ENCODE measurements at regions of chr2 and their contacts with region 1.

Region 1: GRCh38 chr2:37555457-37555856 is 116.0 kb downstream of the CDC42EP3 start:
- DNase-seq: peak; percentile 50
- ATAC-seq: peak; percentile 95
- H3K4me3 Mint-ChIP-seq: no peak overlapping the region
- H3K27ac Mint-ChIP-seq: no peak overlapping the region
- H3K4me1 Mint-ChIP-seq: peaks cover 40% of the 10 kb centered on the region
- H3K27me3 Mint-ChIP-seq: no peaks in the 10 kb centered on the region
- CTCF ChIP-seq: no peak

Region 2: DNA sequence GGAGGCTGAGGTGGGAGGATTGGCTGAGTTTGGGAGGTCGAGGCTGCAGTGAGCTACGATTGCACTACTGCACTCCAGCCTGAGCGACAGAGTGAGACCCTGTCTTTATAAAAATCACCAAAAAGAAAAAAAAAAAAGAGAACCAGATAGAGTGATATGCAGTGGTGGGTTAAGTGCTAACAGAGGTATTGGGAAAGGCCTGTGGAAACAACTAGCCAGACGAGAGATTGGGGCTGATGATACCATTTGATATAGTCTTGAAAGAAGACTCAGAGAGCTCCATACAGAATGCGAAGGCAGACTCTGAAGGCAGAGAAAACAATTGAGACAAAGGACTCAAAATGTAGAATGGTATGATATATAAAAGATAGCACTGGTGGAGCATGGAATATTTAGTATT is 18.1 kb before region 1 on chr2:
- CTCF ChIA-PET with region 1: interaction called, 5 read pairs
- POLR2A ChIA-PET with region 1: no interaction called
- intact Hi-C with region 1: loop called (anchors 2 kb)
- DNase-seq: no peak
- ATAC-seq: no peak
- H3K4me3 Mint-ChIP-seq: no peak overlapping the region
- H3K27ac Mint-ChIP-seq: no peak overlapping the region
- H3K4me1 Mint-ChIP-seq: no peaks in the 10 kb centered on the region
- H3K27me3 Mint-ChIP-seq: no peaks in the 10 kb centered on the region
- CTCF ChIP-seq: no peak

Region 3: GRCh38 chr2:37600735-37601134 is 45.3 kb after region 1 on chr2:
- CTCF ChIA-PET with region 1: no interaction called
- POLR2A ChIA-PET with region 1: interaction called, 3 read pairs
- intact Hi-C with region 1: loop called (anchors 2 kb)
- DNase-seq: no peak
- ATAC-seq: peak; percentile 85
- H3K4me3 Mint-ChIP-seq: peak overlapping the region; percentile 60
- H3K27ac Mint-ChIP-seq: peak overlapping the region; percentile 37
- H3K4me1 Mint-ChIP-seq: peaks cover 33% of the 10 kb centered on the region
- H3K27me3 Mint-ChIP-seq: no peaks in the 10 kb centered on the region
- CTCF ChIP-seq: no peak

Region 4: GRCh38 chr2:37635504-37636380 is 80.3 kb after region 1 on chr2:
- CTCF ChIA-PET with region 1: no interaction called
- POLR2A ChIA-PET with region 1: no interaction called
- intact Hi-C with region 1: loop called (anchors 1 kb)
- DNase-seq: peak; percentile 44
- ATAC-seq: peak; percentile 84
- H3K4me3 Mint-ChIP-seq: peak overlapping the region; percentile 52
- H3K27ac Mint-ChIP-seq: peak overlapping the region; percentile 95
- H3K4me1 Mint-ChIP-seq: peaks cover 50% of the 10 kb centered on the region
- H3K27me3 Mint-ChIP-seq: no peaks in the 10 kb centered on the region
- CTCF ChIP-seq: no peak

Region 5: GRCh38 chr2:37672104-37672869 is 116.8 kb after region 1 on chr2:
- CTCF ChIA-PET with region 1: no interaction called
- POLR2A ChIA-PET with region 1: interaction called, 5 read pairs
- intact Hi-C with region 1: loop called (anchors 1 kb)
- DNase-seq: peak; percentile 68
- ATAC-seq: peak; percentile 54
- H3K4me3 Mint-ChIP-seq: peak overlapping the region; percentile 90
- H3K27ac Mint-ChIP-seq: peak overlapping the region; percentile 84
- H3K4me1 Mint-ChIP-seq: peaks cover 50% of the 10 kb centered on the region
- H3K27me3 Mint-ChIP-seq: no peaks in the 10 kb centered on the region
- CTCF ChIP-seq: no peak

Measured in activated B cell treated with CpG ODN at 0.5 μM for 24 hours (primary cell).